ENCODE measurements at regions of chr11 and their contacts with region 1.

Region 1: DNA sequence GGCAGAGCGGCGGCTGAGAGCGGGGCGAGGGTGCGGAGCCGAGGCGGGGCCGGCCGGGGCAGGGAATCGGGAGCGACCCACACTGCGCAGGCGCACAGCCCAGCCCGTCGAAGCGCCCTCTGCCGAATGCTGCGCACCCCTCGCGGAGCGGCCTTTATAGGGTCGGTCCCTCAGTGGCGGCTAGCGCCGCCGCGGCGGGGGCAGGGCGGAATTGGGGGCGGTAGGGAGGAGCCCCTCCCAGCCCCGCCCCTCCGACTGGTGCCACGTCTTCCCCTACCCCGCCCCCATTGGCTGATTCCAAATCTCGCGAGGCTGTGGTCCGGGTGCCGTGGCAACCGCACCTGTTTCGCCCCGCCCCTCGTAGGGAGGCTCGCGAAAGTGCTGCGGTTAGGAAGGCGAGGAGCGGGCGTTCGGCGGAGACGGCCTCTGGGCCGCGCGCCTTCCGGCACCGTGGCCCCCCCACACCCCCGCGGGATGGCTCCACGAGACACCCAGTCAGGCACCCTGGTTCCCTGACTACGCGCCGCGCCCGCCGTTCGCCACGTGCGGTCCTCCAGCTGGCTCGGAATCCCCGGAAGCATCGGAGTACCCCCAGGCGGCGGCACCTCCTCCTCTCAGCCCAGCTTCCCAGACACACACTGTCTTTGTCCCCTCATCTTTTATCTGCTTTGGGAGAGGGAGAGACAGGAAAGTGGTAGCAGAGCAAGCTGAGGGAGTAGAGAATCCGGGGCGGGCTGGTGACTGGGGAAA is at the start of gene EHD1:
- DNase-seq: peak; percentile 98
- H3K4me3 Mint-ChIP-seq: peak within 1 kb of the TSS; percentile 95
- H3K27ac Mint-ChIP-seq: peak within 1 kb of the TSS; percentile 95
- H3K4me1 Mint-ChIP-seq: peaks cover 22% of the 10 kb centered on the region
- H3K27me3 Mint-ChIP-seq: no peaks in the 10 kb centered on the region
- CTCF ChIP-seq: peak; percentile 27
- total RNA-seq, gene EHD1: 67.9 and 80.6 TPM in 2 replicates

Region 2: DNA sequence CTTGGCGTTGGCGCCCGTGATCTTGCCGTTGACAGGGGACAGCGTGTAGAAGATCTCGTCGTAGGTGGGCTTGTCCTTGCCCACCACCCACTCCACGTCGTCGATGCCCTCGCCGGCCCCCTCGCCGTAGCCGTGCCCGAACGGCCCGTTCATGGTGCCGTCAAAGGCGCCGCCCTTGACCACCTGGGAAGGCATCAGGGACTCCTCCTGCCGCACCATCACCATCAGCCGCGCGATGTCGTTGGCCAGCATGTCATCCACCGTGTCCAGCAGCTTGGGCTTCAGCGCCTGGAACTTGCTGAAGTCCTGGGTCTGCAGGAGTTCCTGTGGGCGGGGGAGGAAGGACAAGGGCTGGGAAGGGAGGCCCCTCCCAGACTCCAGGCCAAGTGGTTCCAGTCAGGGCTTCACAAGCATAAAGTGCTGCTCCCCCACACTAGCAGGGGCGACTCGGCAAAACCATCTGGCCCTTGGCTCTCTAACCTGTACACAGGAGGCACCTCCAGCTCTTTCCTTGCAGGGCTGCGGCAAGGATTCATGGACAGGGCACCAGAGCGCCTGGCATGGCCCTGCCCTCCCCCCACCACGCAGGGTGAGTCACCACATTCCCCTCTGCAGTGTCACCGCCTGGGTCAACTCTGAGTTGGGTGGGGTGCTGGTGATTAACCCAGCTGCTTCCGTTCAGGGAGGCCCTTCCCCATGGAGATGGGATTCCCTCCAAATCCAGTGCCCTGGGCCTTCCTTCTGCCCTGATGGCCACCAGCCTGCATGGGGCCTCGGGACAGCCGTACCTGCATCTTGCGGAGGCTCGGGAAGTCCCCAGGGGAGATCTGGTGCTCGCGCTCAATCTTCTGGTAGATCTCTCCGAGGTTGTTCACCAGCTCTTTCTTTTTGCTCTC is 23.9 kb before region 1 on chr11:
- CTCF ChIA-PET with region 1: interaction called, 286 read pairs
- POLR2A ChIA-PET with region 1: interaction called, 79 read pairs
- intact Hi-C with region 1: loop called (anchors 1 kb)
- DNase-seq: peak; percentile 97
- H3K4me3 Mint-ChIP-seq: peak overlapping the region; percentile 54
- H3K27ac Mint-ChIP-seq: peak overlapping the region; percentile 86
- H3K4me1 Mint-ChIP-seq: peaks cover 28% of the 10 kb centered on the region
- H3K27me3 Mint-ChIP-seq: no peaks in the 10 kb centered on the region
- CTCF ChIP-seq: no peak

Region 3: DNA sequence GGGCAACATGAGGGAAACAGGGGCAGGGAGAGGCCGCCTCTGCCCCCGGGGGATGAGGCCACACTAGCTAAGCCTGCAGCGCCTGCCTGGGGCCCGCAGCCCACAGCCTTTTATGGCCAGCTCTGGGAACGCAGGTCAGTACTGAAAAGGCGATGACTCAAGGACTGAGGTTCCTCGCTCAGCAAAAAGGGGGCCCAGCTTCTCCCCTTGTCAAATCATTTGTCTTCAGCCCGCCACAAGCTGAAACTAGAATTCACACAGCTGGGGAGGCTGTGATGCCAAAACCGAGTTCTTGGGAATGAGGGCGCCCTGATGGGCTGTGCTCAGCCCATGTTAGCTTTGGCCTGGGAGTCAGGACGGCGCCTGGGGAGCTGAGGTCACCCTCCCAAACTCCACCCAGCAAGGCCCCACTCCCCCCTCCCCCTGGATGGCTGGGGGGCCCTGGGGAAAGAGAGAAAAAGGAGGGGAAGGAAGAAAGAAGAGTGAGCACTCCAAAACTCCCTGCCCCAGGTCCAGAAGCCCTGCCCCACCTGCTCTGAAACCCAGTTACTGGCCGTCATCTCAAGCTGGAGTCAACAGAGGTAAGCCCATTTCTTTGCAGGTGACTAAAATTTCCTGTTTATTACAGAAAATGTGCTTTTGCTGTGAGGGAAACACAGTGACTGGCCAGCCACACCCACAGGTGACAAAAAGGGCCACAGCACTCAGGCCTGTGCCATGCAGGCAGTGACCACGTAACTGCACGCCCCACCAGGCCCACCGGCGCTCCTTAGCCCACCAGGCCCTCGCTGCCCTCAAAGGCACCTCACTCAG is 14.0 kb before region 1 on chr11:
- CTCF ChIA-PET with region 1: interaction called, 48 read pairs
- POLR2A ChIA-PET with region 1: interaction called, 103 read pairs
- intact Hi-C with region 1: loop called (anchors 1 kb)
- DNase-seq: no peak
- H3K4me3 Mint-ChIP-seq: no peak overlapping the region
- H3K27ac Mint-ChIP-seq: peak overlapping the region; percentile 49
- H3K4me1 Mint-ChIP-seq: peaks cover 41% of the 10 kb centered on the region
- H3K27me3 Mint-ChIP-seq: no peaks in the 10 kb centered on the region
- CTCF ChIP-seq: no peak

Measured in MCF 10A (cell line).